Right cardiac atrium (tissue), 5 donors: ENCODE measurements at regions of chr2 and their contacts with region 1.

Region 1: GRCh38 chr2:127324635-127325034 is 30.7 kb upstream of the ERCC3 start:
- DNase-seq: no peak
- ATAC-seq: no peak
- H3K4me3 ChIP-seq: no peak overlapping the region
- H3K27ac ChIP-seq: no peak overlapping the region
- H3K4me1 ChIP-seq: no peaks in the 10 kb centered on the region
- H3K27me3 ChIP-seq: no peaks in the 10 kb centered on the region

Region 2: GRCh38 chr2:127479219-127479825 is 154.7 kb after region 1 on chr2:
- intact Hi-C with region 1: loop called (anchors 2 to 10 kb)
- DNase-seq: no peak
- ATAC-seq: peak; percentile 64 to 73
- H3K4me3 ChIP-seq: no peak overlapping the region
- H3K27ac ChIP-seq: no peak overlapping the region
- H3K4me1 ChIP-seq: no peaks in the 10 kb centered on the region
- H3K27me3 ChIP-seq: no peaks in the 10 kb centered on the region

Region 3: GRCh38 chr2:127486247-127487058 is 161.8 kb after region 1 on chr2:
- intact Hi-C with region 1: loop called in 2 of 4 experiments (anchors 5 to 10 kb)
- DNase-seq: no peak
- ATAC-seq: no peak
- H3K4me3 ChIP-seq: no peak overlapping the region
- H3K27ac ChIP-seq: no peak overlapping the region
- H3K4me1 ChIP-seq: no peaks in the 10 kb centered on the region
- H3K27me3 ChIP-seq: no peaks in the 10 kb centered on the region